HAP-1 (cell line): ENCODE measurements at regions of chr2 and their contacts with region 1.

Region 1: GRCh38 chr2:168346725-168347477 is 99.5 kb upstream of the STK39 start:
- DNase-seq: peak; percentile 72 to 84
- H3K4me3 ChIP-seq: peak overlapping the region; percentile 31
- H3K4me1 ChIP-seq: peaks cover 4% of the 10 kb centered on the region
- H3K27me3 ChIP-seq: no peaks in the 10 kb centered on the region

Region 2: GRCh38 chr2:168449419-168449818 is 102.5 kb after region 1 on chr2:
- in situ Hi-C with region 1: no loop called
- DNase-seq: no peak
- H3K4me3 ChIP-seq: no peak overlapping the region
- H3K4me1 ChIP-seq: peaks cover 3% of the 10 kb centered on the region; the same call in 1 of the 2 replicates
- H3K27me3 ChIP-seq: no peaks in the 10 kb centered on the region

Region 3: DNA sequence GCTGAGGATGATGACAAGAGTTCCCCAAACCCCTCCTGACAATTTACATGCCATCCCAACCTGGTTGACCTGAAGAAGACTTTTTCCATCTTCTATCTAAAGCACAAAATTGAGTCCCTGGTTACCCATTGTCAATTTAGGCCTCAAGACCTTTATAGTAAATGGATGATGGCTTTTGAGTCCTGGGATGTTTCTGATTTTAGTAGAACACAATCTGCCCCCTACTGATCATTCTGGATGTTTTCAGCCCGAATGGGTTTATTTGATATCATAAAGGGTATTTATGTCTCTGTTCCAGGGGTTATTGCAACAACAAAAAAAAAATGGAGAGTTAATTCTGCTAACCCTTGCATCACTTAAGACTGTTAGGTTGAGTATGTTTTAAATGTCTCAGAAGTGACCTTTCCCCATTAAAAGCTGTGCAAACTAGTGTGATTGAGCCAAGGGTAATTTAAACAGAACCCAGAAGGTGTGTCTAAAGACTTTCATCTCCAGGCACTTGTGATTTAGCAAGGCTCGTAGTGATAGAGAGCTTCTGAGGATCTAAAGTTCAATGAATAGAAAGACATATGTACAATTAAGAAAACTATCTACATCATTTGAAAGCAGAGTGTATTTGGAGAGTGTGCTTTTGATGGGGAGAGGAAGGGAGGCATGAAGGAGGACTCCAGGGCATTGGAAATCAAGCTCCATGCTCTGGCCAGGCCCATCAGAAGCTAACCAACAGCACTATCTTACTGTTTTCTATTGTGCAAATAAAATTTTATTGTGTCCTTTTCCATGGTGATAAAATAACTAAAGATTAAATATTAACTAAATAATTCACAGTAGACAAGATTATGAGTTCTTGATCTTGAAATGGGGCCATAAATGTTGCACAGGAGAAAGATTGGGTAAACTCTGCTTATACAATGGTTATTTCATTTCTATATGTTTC is 358.9 kb after region 1 on chr2:
- in situ Hi-C with region 1: loop called (anchors 10 kb)
- DNase-seq: peak in 1 of 2 experiments; percentile 49
- H3K4me3 ChIP-seq: no peak overlapping the region
- H3K4me1 ChIP-seq: peaks cover 19% of the 10 kb centered on the region
- H3K27me3 ChIP-seq: no peaks in the 10 kb centered on the region

Region 4: GRCh38 chr2:168758970-168759820 is 412.3 kb after region 1 on chr2:
- in situ Hi-C with region 1: loop called (anchors 10 kb)
- DNase-seq: peak; percentile 41 to 67
- H3K4me3 ChIP-seq: no peak overlapping the region
- H3K4me1 ChIP-seq: no peaks in the 10 kb centered on the region
- H3K27me3 ChIP-seq: no peaks in the 10 kb centered on the region

Region 5: DNA sequence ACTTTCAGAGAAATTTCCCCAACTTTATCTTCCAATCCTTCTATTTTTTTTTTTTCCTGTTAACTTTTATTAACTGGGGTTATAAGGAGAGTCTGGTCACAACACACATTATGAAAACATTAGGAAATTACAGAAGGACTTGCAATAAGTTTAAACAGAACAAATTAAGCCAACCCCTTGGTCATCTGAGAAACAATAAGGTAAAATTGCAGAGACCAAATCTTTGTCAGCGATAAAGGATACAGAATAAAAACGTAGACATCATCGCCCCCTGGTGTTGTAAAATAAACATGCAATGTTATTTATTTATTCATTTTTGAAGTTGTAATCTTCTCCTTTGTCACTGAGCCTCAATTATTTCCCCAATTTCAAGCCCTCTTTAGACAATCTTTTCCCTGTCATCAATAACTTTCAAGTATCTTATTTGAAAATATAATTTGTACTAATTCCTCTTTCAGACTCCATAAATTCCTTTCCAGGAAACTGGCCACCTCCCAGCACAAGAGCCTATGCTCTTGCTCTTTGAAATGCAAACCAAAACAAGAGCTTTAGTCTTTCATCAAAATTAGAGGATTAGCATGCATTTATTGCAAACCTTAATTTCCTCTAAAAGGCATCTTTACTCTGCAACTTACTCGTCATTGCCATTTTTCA is 573.7 kb after region 1 on chr2:
- in situ Hi-C with region 1: loop called (anchors 5 kb)
- DNase-seq: peak in 1 of 2 experiments; percentile 49
- H3K4me3 ChIP-seq: no peak overlapping the region
- H3K4me1 ChIP-seq: no peaks in the 10 kb centered on the region
- H3K27me3 ChIP-seq: peaks cover 15% of the 10 kb centered on the region